Mammary epithelial cell (primary cell): ENCODE measurements at regions of chr1 and their contacts with region 1.

Region 1: GRCh38 chr1:8571200-8571984 is 246.0 kb downstream of the RERE start:
- DNase-seq: peak; percentile 24
- H3K4me3 ChIP-seq: no peak overlapping the region
- H3K27ac ChIP-seq: no peak overlapping the region
- H3K4me1 ChIP-seq: no peaks in the 10 kb centered on the region
- H3K27me3 ChIP-seq: no peaks in the 10 kb centered on the region
- CTCF ChIP-seq: peak; percentile 37 to 38

Region 2: GRCh38 chr1:8477166-8477982 is 94.0 kb before region 1 on chr1:
- CTCF ChIA-PET with region 1: no interaction called
- dilution Hi-C with region 1: no loop called
- in situ Hi-C with region 1: no loop called
- intact Hi-C with region 1: no loop called
- DNase-seq: no peak
- H3K4me3 ChIP-seq: no peak overlapping the region
- H3K27ac ChIP-seq: no peak overlapping the region
- H3K4me1 ChIP-seq: no peaks in the 10 kb centered on the region
- H3K27me3 ChIP-seq: no peaks in the 10 kb centered on the region
- CTCF ChIP-seq: no peak

Region 3: DNA sequence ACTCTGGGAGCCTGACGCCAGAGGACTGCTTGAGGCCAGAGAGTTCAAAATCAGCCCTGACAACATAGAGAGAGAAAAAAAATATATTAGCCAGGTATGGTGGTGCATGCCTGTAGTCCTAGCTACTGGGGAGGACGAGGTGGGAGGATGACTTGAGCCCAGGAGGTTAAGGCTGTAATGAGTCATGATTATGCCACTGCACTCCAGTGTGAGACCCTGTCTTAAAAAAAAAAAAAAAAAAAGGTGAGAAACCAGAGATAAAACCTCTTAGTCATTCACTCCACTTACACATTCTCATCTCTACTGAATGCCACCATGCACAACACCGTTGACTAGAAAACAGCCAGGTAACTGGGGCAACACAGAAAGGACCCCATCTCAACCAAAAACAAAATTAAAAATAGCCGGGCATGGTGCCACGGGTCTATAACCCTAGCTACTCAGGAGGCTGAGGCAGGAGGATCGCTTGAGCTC is 75.4 kb before region 1 on chr1:
- CTCF ChIA-PET with region 1: interaction called, 11 read pairs
- dilution Hi-C with region 1: no loop called
- in situ Hi-C with region 1: no loop called
- intact Hi-C with region 1: no loop called
- DNase-seq: no peak
- H3K4me3 ChIP-seq: no peak overlapping the region
- H3K27ac ChIP-seq: no peak overlapping the region
- H3K4me1 ChIP-seq: peaks cover 2% of the 10 kb centered on the region
- H3K27me3 ChIP-seq: no peaks in the 10 kb centered on the region
- CTCF ChIP-seq: no peak